Activated CD8-positive, alpha-beta memory T cell treated with anti-CD3 and anti-CD28 coated beads, Interleukin-2, amount 10 ng/mL, durations not matched to agents 7 days and 5 days (primary cell): ENCODE measurements at regions of chr16 and their contacts with region 1.

Region 1: DNA sequence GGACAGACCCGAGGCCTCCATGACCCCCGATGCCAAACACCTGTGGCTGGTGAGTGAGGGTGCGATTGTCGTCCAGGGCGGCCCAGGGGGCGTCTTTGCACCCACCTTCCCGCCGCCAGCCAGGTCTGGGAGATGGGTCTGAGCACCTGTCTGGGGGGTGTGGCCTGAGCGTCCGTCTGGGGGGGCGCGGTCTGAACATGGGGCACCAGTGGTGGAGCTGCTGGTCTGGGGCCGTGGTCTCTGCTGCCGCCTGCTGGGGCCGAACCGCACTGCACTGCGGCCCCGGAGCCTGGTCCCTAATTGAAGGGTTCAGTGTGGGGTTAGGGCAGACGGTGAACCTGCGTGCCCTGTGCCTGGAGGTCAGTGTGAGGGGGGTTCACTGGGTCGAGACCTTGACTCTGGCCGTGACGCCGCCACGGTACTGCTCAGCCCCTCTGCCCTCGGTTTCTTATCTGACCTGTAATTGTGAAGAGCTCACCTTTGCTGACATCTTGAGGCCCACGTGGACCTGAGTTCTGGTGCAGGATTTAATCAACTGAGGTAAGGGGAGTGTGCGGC is 12.6 kb upstream of the TCF25 start:
- DNase-seq: peak; percentile 83
- ATAC-seq: peak; percentile 87
- H3K4me3 Mint-ChIP-seq: no peak overlapping the region
- H3K27ac Mint-ChIP-seq: no peak overlapping the region
- H3K4me1 Mint-ChIP-seq: peaks cover 27% of the 10 kb centered on the region
- H3K27me3 Mint-ChIP-seq: peaks cover 14% of the 10 kb centered on the region

Region 2: GRCh38 chr16:89711601-89712273 is 149.1 kb before region 1 on chr16:
- CTCF ChIA-PET with region 1: interaction called, 69 read pairs
- DNase-seq: peak; percentile 87
- ATAC-seq: peak; percentile 92
- H3K4me3 Mint-ChIP-seq: peak overlapping the region; percentile 68
- H3K27ac Mint-ChIP-seq: no peak overlapping the region
- H3K4me1 Mint-ChIP-seq: peaks cover 13% of the 10 kb centered on the region
- H3K27me3 Mint-ChIP-seq: no peaks in the 10 kb centered on the region

Region 3: GRCh38 chr16:89749647-89750046 is 111.2 kb before region 1 on chr16:
- CTCF ChIA-PET with region 1: interaction called, 10 read pairs
- DNase-seq: no peak
- ATAC-seq: no peak
- H3K4me3 Mint-ChIP-seq: no peak overlapping the region
- H3K27ac Mint-ChIP-seq: no peak overlapping the region
- H3K4me1 Mint-ChIP-seq: peaks cover 2% of the 10 kb centered on the region
- H3K27me3 Mint-ChIP-seq: no peaks in the 10 kb centered on the region

Region 4: DNA sequence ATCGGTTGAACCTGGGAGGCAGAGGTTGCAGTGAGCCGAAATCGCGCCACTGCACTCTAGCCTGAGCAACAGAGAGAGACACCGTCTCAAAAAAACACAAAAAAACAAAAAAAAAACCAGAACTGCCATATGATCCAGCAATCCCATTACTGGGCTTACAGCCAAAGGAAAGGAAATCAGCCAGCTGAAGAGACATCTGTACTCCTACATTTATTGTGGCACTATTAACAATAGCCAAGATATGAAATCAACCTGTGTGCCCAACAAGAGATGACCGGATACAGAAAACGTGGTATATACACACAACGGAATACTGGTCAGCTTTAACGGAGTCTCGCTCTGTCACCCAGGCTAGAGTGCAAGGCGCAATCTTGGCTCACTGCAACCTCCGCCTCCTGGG is 59.0 kb before region 1 on chr16:
- CTCF ChIA-PET with region 1: interaction called, 10 read pairs
- DNase-seq: no peak
- ATAC-seq: no peak
- H3K4me3 Mint-ChIP-seq: no peak overlapping the region
- H3K27ac Mint-ChIP-seq: no peak overlapping the region
- H3K4me1 Mint-ChIP-seq: no peaks in the 10 kb centered on the region
- H3K27me3 Mint-ChIP-seq: no peaks in the 10 kb centered on the region

Region 5: GRCh38 chr16:89873972-89874689 is 13.3 kb after region 1 on chr16:
- CTCF ChIA-PET with region 1: interaction called, 26 read pairs
- DNase-seq: peak; percentile 96
- ATAC-seq: peak; percentile 74
- H3K4me3 Mint-ChIP-seq: peak overlapping the region; percentile 83
- H3K27ac Mint-ChIP-seq: peak overlapping the region; percentile 98
- H3K4me1 Mint-ChIP-seq: peaks cover 21% of the 10 kb centered on the region
- H3K27me3 Mint-ChIP-seq: no peaks in the 10 kb centered on the region